ENCODE measurements at regions of chr9 and their contacts with region 1.

Region 1: DNA sequence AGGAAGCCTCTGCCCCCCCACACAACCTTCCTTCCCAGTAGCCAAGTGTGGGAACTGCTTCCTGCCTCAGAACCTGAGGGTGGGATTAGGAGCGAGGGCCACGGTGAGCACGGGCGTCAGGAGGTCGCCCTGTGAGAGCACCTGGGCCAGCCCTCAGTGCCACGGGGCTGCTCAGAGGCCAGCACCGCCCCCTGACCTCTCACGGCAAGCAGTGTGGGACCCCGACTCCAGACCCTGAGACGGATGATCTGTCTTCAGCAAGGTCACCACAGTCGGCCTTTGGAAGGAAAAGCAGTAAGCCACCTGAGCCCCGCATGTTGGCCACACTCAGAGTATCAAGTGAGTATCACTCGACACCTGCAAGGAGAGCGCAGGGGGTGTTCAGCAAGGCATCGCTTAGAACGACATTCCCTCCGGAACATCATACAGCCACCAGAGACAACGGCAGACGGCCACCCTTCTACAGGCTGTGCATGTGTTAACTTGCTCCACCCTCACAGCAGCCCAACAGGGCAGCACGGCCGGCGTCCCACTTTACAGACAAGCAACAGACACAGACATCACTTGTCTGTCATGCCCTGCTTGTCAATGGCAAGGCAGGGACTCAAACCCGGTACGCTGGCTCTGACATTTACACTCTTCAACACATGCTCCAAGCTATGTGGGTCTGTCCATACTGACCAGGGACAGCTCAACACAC is 50.2 kb downstream of the IPPK start:
- DNase-seq: no peak
- ATAC-seq: peak in 1 of 8 donors; percentile 52
- H3K4me3 ChIP-seq: no peak overlapping the region
- H3K27ac ChIP-seq: peak overlapping the region in 1 of 10 donors; percentile 25
- H3K4me1 ChIP-seq: peaks cover 0 to 40% (median 9%) of the 10 kb centered on the region in 9 donors
- H3K27me3 ChIP-seq: no peaks in the 10 kb centered on the region
- CTCF ChIP-seq: no peak

Region 2: GRCh38 chr9:92501671-92502393 is 117.9 kb before region 1 on chr9:
- intact Hi-C with region 1: loop called in 1 of 10 experiments (anchors 10 kb)
- DNase-seq: no peak
- ATAC-seq: peak; percentile 55 to 85 (median 76)
- H3K4me3 ChIP-seq: no peak overlapping the region
- H3K27ac ChIP-seq: peak overlapping the region in 4 of 10 donors; percentile 1 to 67 (median 16)
- H3K4me1 ChIP-seq: peaks cover 2 to 51% (median 20%) of the 10 kb centered on the region in 9 donors
- H3K27me3 ChIP-seq: no peaks in the 10 kb centered on the region
- CTCF ChIP-seq: peak in 7 of 9 donors; percentile 42 to 56 (median 45)

Region 3: GRCh38 chr9:92535940-92536850 is 83.6 kb before region 1 on chr9 and contains the start of gene ECM2:
- intact Hi-C with region 1: no loop called
- DNase-seq: peak in 1 of 2 donors; percentile 20
- ATAC-seq: peak in 7 of 8 donors; percentile 27 to 84 (median 76)
- H3K4me3 ChIP-seq: peak within 1 kb of the TSS in 8 of 10 donors; percentile 26 to 54 (median 38)
- H3K27ac ChIP-seq: peak within 1 kb of the TSS; percentile 40 to 86 (median 68)
- H3K4me1 ChIP-seq: peaks cover 0 to 42% (median 16%) of the 10 kb centered on the region in 9 donors
- H3K27me3 ChIP-seq: no peaks in the 10 kb centered on the region
- CTCF ChIP-seq: no peak
- total RNA-seq, gene ECM2: 4.2 to 14.9 (median 9.2) TPM